HEK293 (cell line): ENCODE measurements at regions of chr1 and their contacts with region 1.

Region 1: GRCh38 chr1:115807723-115808122 is 33.2 kb downstream of the NHLH2 start:
- H3K4me3 ChIP-seq: no peak overlapping the region
- H3K27ac ChIP-seq: no peak overlapping the region
- H3K4me1 ChIP-seq: no peaks in the 10 kb centered on the region
- CTCF ChIP-seq: peak; percentile 27; the same call in 1 of the 2 replicates

Region 2: GRCh38 chr1:115828101-115829022 is 20.6 kb after region 1 on chr1:
- CTCF ChIA-PET with region 1: interaction called, 16 read pairs
- POLR2A ChIA-PET with region 1: no interaction called
- H3K4me3 ChIP-seq: no peak overlapping the region
- H3K27ac ChIP-seq: no peak overlapping the region
- H3K4me1 ChIP-seq: no peaks in the 10 kb centered on the region
- CTCF ChIP-seq: no peak

Region 3: GRCh38 chr1:115980998-115981993 is 173.6 kb after region 1 on chr1:
- CTCF ChIA-PET with region 1: interaction called, 57 read pairs
- POLR2A ChIA-PET with region 1: no interaction called
- H3K4me3 ChIP-seq: no peak overlapping the region
- H3K27ac ChIP-seq: no peak overlapping the region
- H3K4me1 ChIP-seq: no peaks in the 10 kb centered on the region
- CTCF ChIP-seq: peak; percentile 70